ENCODE measurements at regions of chr14 and their contacts with region 1.

Region 1: GRCh38 chr14:61426048-61426447 is 104.7 kb downstream of the PRKCH start:
- DNase-seq: no peak
- H3K4me3 ChIP-seq: no peak overlapping the region
- H3K4me3 Mint-ChIP-seq: peak overlapping the region in 6 of 8 donors; percentile 4 to 76 (median 46)
- H3K27ac ChIP-seq: no peak overlapping the region
- H3K27ac Mint-ChIP-seq: peak overlapping the region in 6 of 7 donors; percentile 9 to 83 (median 66)
- H3K4me1 ChIP-seq: peaks cover 97% of the 10 kb centered on the region
- H3K4me1 Mint-ChIP-seq: peaks cover 61 to 75% (median 67%) of the 10 kb centered on the region in 4 donors
- H3K27me3 ChIP-seq: no peaks in the 10 kb centered on the region
- H3K27me3 Mint-ChIP-seq: no peaks in the 10 kb centered on the region

Region 2: GRCh38 chr14:61394542-61394941 is 31.5 kb before region 1 on chr14:
- CTCF ChIA-PET with region 1: no interaction called
- POLR2A ChIA-PET with region 1: no interaction called
- intact Hi-C with region 1: no loop called
- DNase-seq: no peak
- H3K4me3 ChIP-seq: no peak overlapping the region
- H3K4me3 Mint-ChIP-seq: peak overlapping the region in 4 of 8 donors; percentile 25 to 66 (median 47)
- H3K27ac ChIP-seq: no peak overlapping the region
- H3K27ac Mint-ChIP-seq: peak overlapping the region in 5 of 7 donors; percentile 20 to 57 (median 43)
- H3K4me1 ChIP-seq: peaks cover 100% of the 10 kb centered on the region
- H3K4me1 Mint-ChIP-seq: peaks cover 35 to 78% (median 56%) of the 10 kb centered on the region in 4 donors
- H3K27me3 ChIP-seq: no peaks in the 10 kb centered on the region
- H3K27me3 Mint-ChIP-seq: no peaks in the 10 kb centered on the region

Region 3: GRCh38 chr14:61438860-61439684 is 13.0 kb after region 1 on chr14:
- CTCF ChIA-PET with region 1: interaction called, 9 read pairs
- POLR2A ChIA-PET with region 1: interaction called, 4 read pairs
- intact Hi-C with region 1: loop called (anchors 1 kb)
- DNase-seq: peak; percentile 36 to 74 (median 42)
- H3K4me3 ChIP-seq: peak overlapping the region in 1 of 2 donors; percentile 26
- H3K4me3 Mint-ChIP-seq: peak overlapping the region; percentile 78 to 87 (median 82)
- H3K27ac ChIP-seq: peak overlapping the region; percentile 20
- H3K27ac Mint-ChIP-seq: peak overlapping the region; percentile 89 to 98 (median 96)
- H3K4me1 ChIP-seq: peaks cover 98% of the 10 kb centered on the region
- H3K4me1 Mint-ChIP-seq: peaks cover 74 to 97% (median 85%) of the 10 kb centered on the region in 4 donors
- H3K27me3 ChIP-seq: no peaks in the 10 kb centered on the region
- H3K27me3 Mint-ChIP-seq: no peaks in the 10 kb centered on the region

Measured in CD4-positive, alpha-beta memory T cell (primary cell).